Gastrocnemius medialis (tissue), 4 donors: ENCODE measurements at regions of chr20 and their contacts with region 1.

Region 1: GRCh38 chr20:8853805-8854338 is 215.0 kb upstream of the PLCB4 start:
- DNase-seq: peak in 1 of 2 donors; percentile 7
- ATAC-seq: peak; percentile 73 to 80
- H3K4me3 ChIP-seq: peak overlapping the region in 2 of 4 donors; percentile 7 to 21
- H3K27ac ChIP-seq: peak overlapping the region; percentile 21 to 61 (median 46)
- H3K4me1 ChIP-seq: peaks cover 5 to 8% of the 10 kb centered on the region in 2 donors
- H3K27me3 ChIP-seq: no peaks in the 10 kb centered on the region
- CTCF ChIP-seq: peak; percentile 70 to 87 (median 76)
- POLR2A ChIP-seq: no peak

Region 2: GRCh38 chr20:8144282-8145245 is 709.3 kb before region 1 on chr20:
- in situ Hi-C with region 1: no loop called
- intact Hi-C with region 1: loop called (anchors 5 kb)
- DNase-seq: no peak
- ATAC-seq: no peak
- H3K4me3 ChIP-seq: no peak overlapping the region
- H3K27ac ChIP-seq: no peak overlapping the region
- H3K4me1 ChIP-seq: peaks cover 6 to 10% of the 10 kb centered on the region in 2 donors
- H3K27me3 ChIP-seq: no peaks in the 10 kb centered on the region
- CTCF ChIP-seq: no peak
- POLR2A ChIP-seq: no peak

Region 3: DNA sequence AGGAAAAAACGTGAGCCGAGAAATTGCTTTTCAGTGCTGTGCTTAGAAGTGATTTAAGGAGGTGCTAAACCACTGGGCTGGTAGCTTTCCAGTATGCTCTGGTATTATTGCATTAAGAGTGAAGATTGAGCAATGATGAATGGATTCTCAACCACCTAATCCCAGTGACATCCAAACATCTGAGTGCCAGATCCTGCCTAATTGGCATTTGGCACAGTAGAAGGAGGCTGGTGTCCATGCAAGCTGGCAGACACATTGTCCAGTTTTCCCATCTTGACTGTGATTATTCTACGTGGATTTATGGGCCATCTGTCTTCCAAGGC is 183.0 kb before region 1 on chr20:
- in situ Hi-C with region 1: no loop called
- intact Hi-C with region 1: no loop called
- DNase-seq: peak; percentile 16 to 26
- ATAC-seq: peak; percentile 81 to 94
- H3K4me3 ChIP-seq: no peak overlapping the region
- H3K27ac ChIP-seq: no peak overlapping the region
- H3K4me1 ChIP-seq: peaks cover 20 to 22% of the 10 kb centered on the region in 2 donors
- H3K27me3 ChIP-seq: no peaks in the 10 kb centered on the region
- CTCF ChIP-seq: no peak
- POLR2A ChIP-seq: no peak

Region 4: DNA sequence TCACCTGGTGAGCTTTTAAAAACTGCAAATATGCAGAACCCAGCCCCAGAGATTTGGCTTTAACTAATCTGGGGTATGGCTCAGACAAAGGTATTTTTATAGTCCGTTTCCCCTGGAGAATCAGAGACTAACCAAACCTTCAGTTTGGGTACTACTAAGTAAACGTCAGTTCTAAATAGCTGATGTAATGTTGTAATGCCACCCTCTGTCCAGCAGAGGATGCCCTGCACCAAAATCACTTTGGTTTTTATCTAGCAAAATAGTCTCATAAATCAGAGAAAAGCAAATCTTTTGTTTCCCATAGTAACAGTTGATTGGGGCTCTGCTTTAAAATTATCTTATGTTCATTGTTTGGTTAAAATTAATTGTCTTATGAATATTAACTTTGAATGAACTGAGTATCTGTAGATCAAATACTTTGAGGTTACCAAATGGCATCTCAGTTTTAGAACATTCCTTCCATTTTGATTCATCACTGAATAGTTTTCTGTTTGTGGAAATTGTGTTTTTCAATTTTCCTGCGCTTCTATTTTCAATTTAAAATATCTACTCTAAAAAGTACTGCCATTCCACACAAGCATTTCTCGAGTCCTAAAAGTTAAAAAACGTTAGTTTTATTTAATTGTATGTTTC is 63.3 kb before region 1 on chr20:
- in situ Hi-C with region 1: no loop called
- intact Hi-C with region 1: loop called (anchors 5 kb)
- DNase-seq: no peak
- ATAC-seq: no peak
- H3K4me3 ChIP-seq: no peak overlapping the region
- H3K27ac ChIP-seq: no peak overlapping the region
- H3K4me1 ChIP-seq: no peaks in the 10 kb centered on the region
- H3K27me3 ChIP-seq: no peaks in the 10 kb centered on the region
- CTCF ChIP-seq: peak; percentile 57 to 85 (median 78)
- POLR2A ChIP-seq: no peak

Region 5: GRCh38 chr20:8829256-8829655 is 24.6 kb before region 1 on chr20:
- in situ Hi-C with region 1: no loop called
- intact Hi-C with region 1: no loop called
- DNase-seq: no peak
- ATAC-seq: no peak
- H3K4me3 ChIP-seq: no peak overlapping the region
- H3K27ac ChIP-seq: no peak overlapping the region
- H3K4me1 ChIP-seq: no peaks in the 10 kb centered on the region
- H3K27me3 ChIP-seq: no peaks in the 10 kb centered on the region
- CTCF ChIP-seq: no peak
- POLR2A ChIP-seq: no peak

Region 6: GRCh38 chr20:9068851-9069663 is 215.2 kb after region 1 on chr20 and contains the start of gene PLCB4:
- in situ Hi-C with region 1: no loop called
- intact Hi-C with region 1: no loop called
- DNase-seq: no peak
- ATAC-seq: peak in 1 of 2 donors; percentile 14
- H3K4me3 ChIP-seq: peak within 1 kb of the TSS; percentile 57 to 69 (median 66)
- H3K27ac ChIP-seq: peak within 1 kb of the TSS; percentile 62 to 78 (median 66)
- H3K4me1 ChIP-seq: peaks cover 0 to 6% of the 10 kb centered on the region in 2 donors
- H3K27me3 ChIP-seq: peaks cover 5 to 12% (median 5%) of the 10 kb centered on the region in 3 donors
- CTCF ChIP-seq: no peak
- POLR2A ChIP-seq: no peak
- total RNA-seq, gene PLCB4: 2.3 to 3.9 (median 3.3) TPM

Region 7: DNA sequence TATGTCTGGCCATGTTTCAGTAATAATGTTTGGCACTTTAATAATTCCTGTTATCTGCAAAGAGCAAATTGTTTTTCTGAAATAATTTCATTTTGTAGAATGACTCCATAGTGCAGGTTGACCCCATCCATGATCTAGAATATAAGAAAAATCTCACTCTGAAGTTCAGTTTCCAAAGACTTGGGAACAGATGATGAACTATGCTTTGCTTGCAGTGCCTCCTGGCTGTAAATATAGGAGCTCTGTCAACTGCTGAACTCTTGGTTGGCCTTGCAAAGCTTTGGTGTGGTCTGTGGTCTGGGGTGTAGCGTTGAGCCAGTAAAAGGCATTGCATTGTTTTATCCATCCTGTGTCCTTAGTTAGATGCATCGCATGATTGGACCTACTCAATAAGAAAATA is 319.0 kb after region 1 on chr20:
- in situ Hi-C with region 1: loop called in 1 of 4 experiments (anchors 25 kb)
- intact Hi-C with region 1: loop called (anchors 1 kb)
- DNase-seq: no peak
- ATAC-seq: no peak
- H3K4me3 ChIP-seq: no peak overlapping the region
- H3K27ac ChIP-seq: no peak overlapping the region
- H3K4me1 ChIP-seq: no peaks in the 10 kb centered on the region
- H3K27me3 ChIP-seq: no peaks in the 10 kb centered on the region
- CTCF ChIP-seq: peak in 1 of 5 experiments; percentile 19
- POLR2A ChIP-seq: no peak

Region 8: DNA sequence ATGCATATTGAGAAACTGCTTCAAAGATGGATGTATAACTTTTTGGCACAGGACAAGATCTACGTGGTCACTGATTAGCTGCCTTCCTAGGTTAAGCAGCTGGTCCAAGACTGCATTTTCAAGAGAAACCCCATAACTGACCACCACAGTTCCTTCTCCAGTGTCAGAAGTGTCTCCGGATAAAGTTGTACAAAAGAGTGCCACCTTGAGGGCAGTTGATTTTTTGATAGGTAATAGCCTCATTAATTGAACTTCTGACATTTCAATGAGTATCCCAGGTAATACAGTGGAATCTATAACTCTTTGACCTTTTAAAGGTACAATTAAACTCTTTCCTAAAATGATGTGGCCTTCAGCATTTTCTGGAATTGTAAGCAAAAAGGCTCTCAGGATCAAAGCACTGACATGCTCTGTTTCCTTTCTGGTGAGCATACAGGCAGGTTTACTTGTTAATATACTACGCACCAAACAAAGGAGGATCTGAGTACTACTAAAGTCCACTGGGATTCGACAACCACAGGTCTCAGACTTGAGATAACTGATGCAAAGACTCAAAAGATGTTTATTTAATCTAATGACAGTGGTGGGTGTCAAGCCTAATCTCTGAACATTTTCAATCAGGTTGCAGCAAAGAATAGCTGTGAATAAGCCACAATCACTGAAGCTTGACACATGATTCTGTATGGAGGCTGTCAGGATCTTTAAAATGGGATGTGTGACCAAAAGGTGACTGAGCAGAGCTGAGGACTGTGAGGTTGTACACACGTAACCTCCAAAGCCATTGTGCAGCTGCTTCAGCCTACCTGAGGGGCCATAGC is 1558.9 kb after region 1 on chr20:
- in situ Hi-C with region 1: no loop called
- intact Hi-C with region 1: no loop called
- DNase-seq: no peak
- ATAC-seq: no peak
- H3K4me3 ChIP-seq: no peak overlapping the region
- H3K27ac ChIP-seq: no peak overlapping the region
- H3K4me1 ChIP-seq: peaks cover 2 to 10% of the 10 kb centered on the region in 2 donors
- H3K27me3 ChIP-seq: no peaks in the 10 kb centered on the region
- CTCF ChIP-seq: no peak
- POLR2A ChIP-seq: no peak